Breast epithelium (tissue), 4 donors: ENCODE measurements at regions of chr12 and their contacts with region 1.

Region 1: DNA sequence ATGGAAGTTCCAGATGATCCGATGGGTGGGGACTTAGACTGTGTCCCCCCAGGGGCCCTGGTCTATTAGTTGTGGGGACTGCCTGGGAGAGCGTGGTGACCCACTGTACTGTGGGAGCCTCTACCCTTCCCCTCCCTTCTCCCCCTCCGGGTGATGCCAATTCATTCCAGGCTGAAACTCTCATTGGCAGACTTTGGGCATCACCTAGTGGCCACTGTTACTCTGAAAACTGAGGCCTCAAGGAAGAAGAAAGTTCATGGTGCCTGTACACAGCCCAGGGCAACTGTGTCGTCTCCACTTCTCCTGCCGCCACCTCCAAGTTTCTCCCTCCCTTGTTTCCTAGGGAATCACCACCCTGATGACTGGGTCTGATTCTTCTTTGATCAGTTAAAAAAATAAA is 173.6 kb upstream of the ALG10B start:
- DNase-seq: no peak
- H3K4me3 ChIP-seq: no peak overlapping the region
- H3K27ac ChIP-seq: no peak overlapping the region
- H3K4me1 ChIP-seq: no peaks in the 10 kb centered on the region
- H3K27me3 ChIP-seq: no peaks in the 10 kb centered on the region
- CTCF ChIP-seq: no peak
- POLR2A ChIP-seq: no peak

Region 2: DNA sequence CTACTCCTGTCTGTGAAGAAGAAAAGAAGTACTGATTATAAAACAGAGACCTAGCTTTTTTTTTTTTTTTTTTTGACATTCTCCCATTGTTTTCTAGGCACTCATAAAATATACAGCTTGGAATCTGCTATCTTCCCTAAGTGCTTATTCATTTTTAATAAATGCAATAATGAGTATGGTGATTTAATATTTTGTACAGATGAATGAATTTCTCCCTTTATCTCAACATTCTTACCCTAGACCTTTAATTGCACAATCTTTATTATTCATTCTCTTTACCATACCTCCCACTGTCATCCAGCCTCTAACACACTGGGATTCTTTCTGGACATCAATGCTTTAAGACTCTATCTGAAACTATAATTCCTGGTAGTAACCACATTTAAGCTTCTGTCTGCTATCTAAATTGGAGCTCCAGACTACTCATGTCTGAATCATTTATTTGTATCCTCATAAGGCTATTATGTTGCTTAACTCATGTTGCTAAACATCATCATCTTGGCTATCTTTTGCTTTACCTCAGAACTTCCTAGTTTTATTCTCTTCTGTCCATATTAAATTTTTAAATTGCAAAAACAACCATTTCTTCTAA is 443.8 kb after region 1 on chr12:
- intact Hi-C with region 1: no loop called
- DNase-seq: no peak
- H3K4me3 ChIP-seq: no peak overlapping the region
- H3K27ac ChIP-seq: no peak overlapping the region
- H3K4me1 ChIP-seq: no peaks in the 10 kb centered on the region
- H3K27me3 ChIP-seq: no peaks in the 10 kb centered on the region
- CTCF ChIP-seq: no peak
- POLR2A ChIP-seq: no peak

Region 3: DNA sequence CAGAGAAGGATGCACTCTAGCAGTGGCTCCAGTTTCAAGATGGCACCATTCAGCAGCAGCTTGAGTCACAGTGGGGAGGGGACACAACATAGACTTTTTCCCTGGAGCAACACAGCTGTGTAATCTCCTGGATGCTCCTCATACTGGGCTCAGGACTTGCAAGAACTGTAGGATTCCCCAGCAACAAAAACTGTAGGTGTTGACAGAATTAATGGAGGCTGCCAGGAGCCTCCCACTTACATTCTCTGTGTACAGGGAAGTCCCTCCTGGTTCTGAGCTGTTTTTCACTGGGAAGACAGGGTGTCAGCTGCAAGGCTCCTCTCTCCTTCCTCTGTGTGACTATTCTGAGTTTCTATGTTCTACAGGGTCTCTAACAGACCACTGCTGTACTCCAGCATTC is 1082.0 kb after region 1 on chr12:
- intact Hi-C with region 1: loop called (anchors 5 kb)
- DNase-seq: no peak
- H3K4me3 ChIP-seq: no peak overlapping the region
- H3K27ac ChIP-seq: no peak overlapping the region
- H3K4me1 ChIP-seq: no peaks in the 10 kb centered on the region
- H3K27me3 ChIP-seq: no peaks in the 10 kb centered on the region
- CTCF ChIP-seq: no peak
- POLR2A ChIP-seq: no peak